Ovary (tissue), 10 donors: ENCODE measurements at regions of chr7 and their contacts with region 1.

Region 1: GRCh38 chr7:105652359-105652993 is 71.2 kb upstream of the EFCAB10 start:
- DNase-seq: peak; percentile 76 to 88 (median 85)
- H3K4me3 ChIP-seq: no peak overlapping the region
- H3K27ac ChIP-seq: no peak overlapping the region
- H3K4me1 ChIP-seq: peaks cover 17% of the 10 kb centered on the region
- H3K27me3 ChIP-seq: no peaks in the 10 kb centered on the region
- CTCF ChIP-seq: peak; percentile 73 to 91 (median 79)
- EP300 ChIP-seq: no peak
- POLR2A ChIP-seq: peak; percentile 17

Region 2: GRCh38 chr7:105713488-105714465 is 61.3 kb after region 1 on chr7:
- intact Hi-C with region 1: no loop called
- DNase-seq: no peak
- H3K4me3 ChIP-seq: no peak overlapping the region
- H3K27ac ChIP-seq: no peak overlapping the region
- H3K4me1 ChIP-seq: no peaks in the 10 kb centered on the region
- H3K27me3 ChIP-seq: no peaks in the 10 kb centered on the region
- CTCF ChIP-seq: no peak
- EP300 ChIP-seq: no peak
- POLR2A ChIP-seq: no peak

Region 3: DNA sequence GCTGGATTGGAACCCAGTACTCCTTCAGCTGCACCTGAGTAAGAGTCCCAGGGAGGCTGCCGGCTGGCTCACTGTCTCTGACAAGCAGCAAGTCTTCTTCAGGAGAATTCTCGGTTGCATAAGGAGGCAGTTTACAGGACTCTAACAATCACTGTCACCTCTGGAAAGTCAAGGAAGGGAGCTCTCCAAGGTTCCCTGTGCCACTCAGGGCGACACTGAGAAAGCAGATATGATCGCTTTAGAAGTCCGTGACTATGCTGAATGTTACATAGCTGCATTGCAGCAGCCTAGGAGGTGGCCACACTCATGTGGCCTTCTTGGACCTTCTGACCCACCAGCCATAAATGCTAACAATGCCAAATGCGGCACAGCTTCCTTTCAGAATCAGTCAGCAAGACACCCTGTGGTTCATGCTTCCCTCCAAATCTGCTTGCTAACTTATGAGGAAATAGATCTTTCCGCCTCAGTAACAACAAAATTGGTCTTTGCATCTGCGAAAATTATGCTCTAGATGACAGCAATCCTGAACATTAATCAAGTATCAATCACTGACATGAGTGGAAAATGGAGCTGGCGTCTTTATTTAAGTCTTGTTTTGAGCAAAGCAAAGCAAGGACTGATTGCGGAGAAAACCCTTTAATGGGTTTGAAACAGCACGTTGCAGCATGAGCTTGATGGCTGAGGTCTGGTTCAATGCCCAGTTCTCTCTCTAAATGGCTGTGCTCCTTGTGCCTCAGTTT is 91.0 kb after region 1 on chr7:
- intact Hi-C with region 1: loop called in 1 of 4 experiments (anchors 10 kb)
- DNase-seq: no peak
- H3K4me3 ChIP-seq: no peak overlapping the region
- H3K27ac ChIP-seq: no peak overlapping the region
- H3K4me1 ChIP-seq: no peaks in the 10 kb centered on the region
- H3K27me3 ChIP-seq: no peaks in the 10 kb centered on the region
- CTCF ChIP-seq: no peak
- EP300 ChIP-seq: no peak
- POLR2A ChIP-seq: no peak

Region 4: DNA sequence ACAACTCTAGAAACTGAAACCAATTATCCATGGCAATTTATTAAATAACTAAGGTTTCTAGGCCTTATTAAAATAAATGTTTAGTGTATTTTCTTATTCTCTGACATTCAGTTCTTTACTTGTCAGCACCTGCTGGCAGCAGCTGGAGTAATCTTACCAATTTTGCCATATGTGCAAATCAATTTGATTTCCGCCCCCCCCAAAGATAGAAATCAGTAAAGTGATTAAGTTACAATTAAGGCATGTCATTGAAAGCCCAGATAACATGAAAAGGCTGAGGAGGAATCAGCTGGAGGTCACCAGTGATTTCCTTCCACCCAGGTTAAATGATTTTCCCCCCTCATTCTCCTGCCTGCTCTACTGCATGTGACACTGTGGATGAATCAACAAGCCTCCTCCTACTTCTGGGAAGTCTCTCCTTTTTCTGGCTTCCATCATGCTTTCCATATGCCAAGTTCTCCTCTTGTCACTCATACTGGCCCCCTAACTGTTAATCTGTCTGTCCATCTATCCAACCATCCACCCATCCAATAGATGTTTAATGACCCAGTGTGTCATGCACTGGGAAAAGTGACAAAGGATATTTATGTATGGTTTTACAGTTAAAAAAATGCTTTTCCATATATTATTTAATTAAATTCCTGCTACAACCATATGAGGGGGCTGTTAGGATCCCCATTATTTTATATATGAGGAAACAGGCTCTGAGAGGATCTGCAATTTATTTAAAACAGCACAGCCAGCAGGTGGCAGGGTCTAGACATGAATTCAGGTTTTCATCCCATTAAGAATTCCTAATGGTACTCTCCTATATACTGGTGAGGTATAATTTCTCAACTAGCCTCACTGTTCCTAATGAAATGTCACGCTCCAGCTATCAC is 107.4 kb after region 1 on chr7:
- intact Hi-C with region 1: loop called in 1 of 4 experiments (anchors 10 kb)
- DNase-seq: peak; percentile 52 to 73 (median 60)
- H3K4me3 ChIP-seq: no peak overlapping the region
- H3K27ac ChIP-seq: no peak overlapping the region
- H3K4me1 ChIP-seq: peaks cover 4% of the 10 kb centered on the region
- H3K27me3 ChIP-seq: no peaks in the 10 kb centered on the region
- CTCF ChIP-seq: peak; percentile 55 to 77 (median 67)
- EP300 ChIP-seq: no peak
- POLR2A ChIP-seq: no peak

Region 5: GRCh38 chr7:105876091-105876963 is 223.9 kb after region 1 on chr7 and contains the start of gene ATXN7L1:
- intact Hi-C with region 1: loop called in 1 of 4 experiments (anchors 10 kb)
- DNase-seq: peak; percentile 94 to 96 (median 95)
- H3K4me3 ChIP-seq: peak within 1 kb of the TSS; percentile 88
- H3K27ac ChIP-seq: peak within 1 kb of the TSS; percentile 54 to 63
- H3K4me1 ChIP-seq: peaks cover 8% of the 10 kb centered on the region
- H3K27me3 ChIP-seq: no peaks in the 10 kb centered on the region
- CTCF ChIP-seq: peak in 2 of 3 donors; percentile 60 to 68
- EP300 ChIP-seq: no peak
- POLR2A ChIP-seq: peak; percentile 48
- total RNA-seq, gene ATXN7L1: 5.6 to 17.6 (median 11.4) TPM